ENCODE measurements at regions of chr10 and their contacts with region 1.

Region 1: DNA sequence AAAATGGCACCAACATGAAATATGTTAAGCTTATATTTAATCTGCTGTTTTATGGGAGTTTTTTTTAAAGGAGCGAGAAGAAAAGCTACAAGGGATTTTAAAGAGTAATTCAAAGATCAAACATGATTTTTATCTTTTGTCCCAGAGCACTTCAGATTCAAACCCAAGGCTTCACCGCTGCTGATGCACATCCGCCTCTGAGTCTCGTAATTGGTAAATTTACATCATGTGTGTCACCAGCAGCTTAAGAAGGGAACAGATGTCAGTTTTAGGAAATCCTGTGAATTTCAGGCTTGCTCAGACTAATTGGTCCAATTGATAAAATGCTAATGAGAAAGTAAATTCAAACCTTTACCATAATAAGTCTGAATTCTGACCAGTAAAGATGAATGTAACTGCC is 406.3 kb downstream of the GFRA1 start:
- DNase-seq: peak; percentile 89
- H3K4me3 ChIP-seq: no peak overlapping the region
- H3K27ac ChIP-seq: peak overlapping the region; percentile 42
- H3K4me1 ChIP-seq: peaks cover 20% of the 10 kb centered on the region
- H3K27me3 ChIP-seq: no peaks in the 10 kb centered on the region
- CTCF ChIP-seq: no peak

Region 2: DNA sequence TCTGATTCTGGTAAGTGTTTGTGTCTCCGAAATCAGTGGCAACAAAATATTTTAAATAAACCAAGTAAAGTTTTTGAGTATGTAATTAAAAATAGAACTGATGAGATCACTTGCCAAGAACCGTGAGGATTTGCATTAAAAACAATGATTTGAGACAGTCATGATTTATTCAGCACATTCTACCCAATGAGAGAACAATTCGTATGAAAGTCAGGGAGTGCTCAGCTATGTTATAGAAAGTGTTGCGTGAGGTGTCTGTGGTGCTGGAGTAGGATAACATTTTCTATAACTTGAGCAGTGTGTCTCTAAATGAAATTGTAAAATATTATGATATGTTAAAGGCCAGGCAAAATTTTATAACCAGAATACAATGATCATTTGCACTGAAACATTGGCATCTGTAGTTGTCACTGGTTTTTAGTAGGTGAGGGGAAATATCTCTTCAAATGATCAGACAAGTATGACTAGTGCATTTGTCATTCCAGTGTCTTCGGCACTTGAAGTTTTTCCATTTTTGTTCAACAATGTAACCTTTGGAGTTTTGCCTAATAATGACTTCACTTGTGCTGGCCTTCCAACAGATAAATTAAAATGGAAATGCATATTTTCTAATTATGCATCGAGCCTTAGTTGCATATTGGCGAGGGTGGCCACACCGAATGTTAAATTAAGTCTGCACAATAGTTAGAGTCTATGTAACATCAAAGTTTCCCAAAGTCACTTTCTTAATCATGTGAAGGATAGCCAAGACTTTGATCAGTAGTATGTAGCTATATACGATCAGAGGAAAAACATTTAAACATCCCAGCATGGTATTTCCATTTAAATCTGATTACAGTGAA is 70.5 kb after region 1 on chr10:
- CTCF ChIA-PET with region 1: no interaction called
- POLR2A ChIA-PET with region 1: interaction called, 3 read pairs
- intact Hi-C with region 1: loop called (anchors 1 kb)
- DNase-seq: peak; percentile 49
- H3K4me3 ChIP-seq: no peak overlapping the region
- H3K27ac ChIP-seq: no peak overlapping the region
- H3K4me1 ChIP-seq: peaks cover 55% of the 10 kb centered on the region
- H3K27me3 ChIP-seq: peaks cover 6% of the 10 kb centered on the region
- CTCF ChIP-seq: no peak

Measured in A673 (cell line).